ENCODE measurements at regions of chr12 and their contacts with region 1.

Region 1: GRCh38 chr12:24838531-24838950 is 110.4 kb downstream of the BCAT1 start:
- DNase-seq: peak; percentile 36
- H3K4me3 Mint-ChIP-seq: peak overlapping the region; percentile 54
- H3K27ac Mint-ChIP-seq: peak overlapping the region; percentile 90
- H3K4me1 Mint-ChIP-seq: peaks cover 59% of the 10 kb centered on the region
- H3K27me3 Mint-ChIP-seq: no peaks in the 10 kb centered on the region

Region 2: DNA sequence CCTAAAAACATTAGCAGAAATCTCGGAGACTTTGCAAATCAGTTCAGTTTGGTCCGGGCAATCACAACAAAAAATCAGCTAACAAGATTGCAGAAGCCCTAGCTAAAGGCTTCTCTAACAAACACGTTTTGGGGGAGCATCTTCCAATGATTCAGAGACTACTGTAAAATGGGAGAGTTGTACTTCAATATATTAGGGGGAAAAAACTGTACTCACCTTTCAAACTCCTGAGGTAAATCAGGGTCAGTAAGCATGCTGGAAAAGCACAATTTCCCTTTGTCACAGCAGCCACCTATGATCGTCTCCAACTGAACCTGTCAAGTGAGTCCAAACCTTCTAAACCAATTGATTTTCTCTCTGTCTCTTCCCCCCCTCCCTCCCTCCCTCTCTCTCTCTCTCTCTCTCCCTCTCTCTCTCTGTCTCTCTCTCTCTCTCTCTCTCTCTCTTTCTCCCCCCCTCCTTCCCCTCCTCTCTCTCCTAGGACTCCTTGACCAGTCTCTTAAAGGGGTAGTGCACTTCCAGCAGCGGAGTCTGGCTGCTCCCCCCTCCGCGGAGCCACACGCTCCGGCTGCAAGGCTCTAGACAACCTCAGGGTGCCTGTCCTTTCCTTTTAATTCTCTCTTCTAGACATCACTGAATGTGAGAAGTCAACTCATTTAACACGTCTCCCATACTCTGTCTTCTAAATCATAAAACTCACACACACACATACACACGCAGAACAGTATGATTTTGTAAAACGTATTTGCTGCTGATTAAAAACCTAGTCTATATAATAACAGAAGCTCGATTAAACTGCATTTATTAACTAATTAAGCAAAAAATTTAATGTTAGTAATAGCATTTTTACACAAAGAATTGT is 889.0 kb before region 1 on chr12 and contains the start of gene SOX5:
- intact Hi-C with region 1: loop called (anchors 5 kb)
- DNase-seq: no peak
- H3K4me3 Mint-ChIP-seq: no peak within 1 kb of the TSS
- H3K27ac Mint-ChIP-seq: no peak within 1 kb of the TSS
- H3K4me1 Mint-ChIP-seq: no peaks in the 10 kb centered on the region
- H3K27me3 Mint-ChIP-seq: peaks cover 4% of the 10 kb centered on the region
- total RNA-seq, gene SOX5: 1.3 and 3.1 TPM in 2 replicates

Region 3: DNA sequence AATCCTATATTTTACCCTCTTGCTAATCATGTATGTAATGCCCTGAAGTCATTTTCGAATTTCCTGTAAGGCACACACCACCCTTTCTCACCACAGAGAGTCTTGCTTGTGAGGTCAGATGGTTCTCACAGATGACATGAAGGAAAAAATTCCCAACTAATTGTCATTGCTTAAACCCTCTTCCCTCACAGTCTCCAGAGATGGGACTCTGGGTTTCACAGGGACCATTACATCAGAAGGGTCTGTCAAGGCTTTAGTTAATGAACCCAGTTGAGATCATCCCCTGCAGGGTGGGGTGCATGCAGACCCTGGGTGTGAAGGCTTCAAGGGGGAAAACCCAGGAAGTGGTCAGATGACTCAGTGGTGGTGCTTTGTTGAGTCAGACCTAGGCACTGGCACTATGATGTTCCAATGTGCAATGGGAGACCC is 119.2 kb before region 1 on chr12:
- intact Hi-C with region 1: loop called (anchors 1 kb)
- DNase-seq: peak; percentile 53
- H3K4me3 Mint-ChIP-seq: peak overlapping the region; percentile 9
- H3K27ac Mint-ChIP-seq: peak overlapping the region; percentile 80
- H3K4me1 Mint-ChIP-seq: peaks cover 35% of the 10 kb centered on the region
- H3K27me3 Mint-ChIP-seq: peaks cover 1% of the 10 kb centered on the region

Region 4: GRCh38 chr12:24795699-24796385 is 42.7 kb before region 1 on chr12:
- intact Hi-C with region 1: loop called (anchors 2 kb)
- DNase-seq: no peak
- H3K4me3 Mint-ChIP-seq: peak overlapping the region; percentile 82
- H3K27ac Mint-ChIP-seq: peak overlapping the region; percentile 10
- H3K4me1 Mint-ChIP-seq: peaks cover 48% of the 10 kb centered on the region
- H3K27me3 Mint-ChIP-seq: no peaks in the 10 kb centered on the region

Region 5: GRCh38 chr12:24808651-24809050 is 29.9 kb before region 1 on chr12:
- intact Hi-C with region 1: no loop called
- DNase-seq: no peak
- H3K4me3 Mint-ChIP-seq: no peak overlapping the region
- H3K27ac Mint-ChIP-seq: no peak overlapping the region
- H3K4me1 Mint-ChIP-seq: peaks cover 9% of the 10 kb centered on the region
- H3K27me3 Mint-ChIP-seq: no peaks in the 10 kb centered on the region

Region 6: GRCh38 chr12:24901576-24902461 is 63.3 kb after region 1 on chr12:
- intact Hi-C with region 1: loop called (anchors 1 kb)
- DNase-seq: peak; percentile 11
- H3K4me3 Mint-ChIP-seq: peak overlapping the region; percentile 99
- H3K27ac Mint-ChIP-seq: peak overlapping the region; percentile 99
- H3K4me1 Mint-ChIP-seq: peaks cover 45% of the 10 kb centered on the region
- H3K27me3 Mint-ChIP-seq: peaks cover 5% of the 10 kb centered on the region

Region 7: GRCh38 chr12:25052196-25052913 is 213.8 kb after region 1 on chr12:
- intact Hi-C with region 1: loop called (anchors 1 kb)
- DNase-seq: peak; percentile 43
- H3K4me3 Mint-ChIP-seq: peak overlapping the region; percentile 92
- H3K27ac Mint-ChIP-seq: peak overlapping the region; percentile 99
- H3K4me1 Mint-ChIP-seq: peaks cover 56% of the 10 kb centered on the region
- H3K27me3 Mint-ChIP-seq: peaks cover 4% of the 10 kb centered on the region

Region 8: DNA sequence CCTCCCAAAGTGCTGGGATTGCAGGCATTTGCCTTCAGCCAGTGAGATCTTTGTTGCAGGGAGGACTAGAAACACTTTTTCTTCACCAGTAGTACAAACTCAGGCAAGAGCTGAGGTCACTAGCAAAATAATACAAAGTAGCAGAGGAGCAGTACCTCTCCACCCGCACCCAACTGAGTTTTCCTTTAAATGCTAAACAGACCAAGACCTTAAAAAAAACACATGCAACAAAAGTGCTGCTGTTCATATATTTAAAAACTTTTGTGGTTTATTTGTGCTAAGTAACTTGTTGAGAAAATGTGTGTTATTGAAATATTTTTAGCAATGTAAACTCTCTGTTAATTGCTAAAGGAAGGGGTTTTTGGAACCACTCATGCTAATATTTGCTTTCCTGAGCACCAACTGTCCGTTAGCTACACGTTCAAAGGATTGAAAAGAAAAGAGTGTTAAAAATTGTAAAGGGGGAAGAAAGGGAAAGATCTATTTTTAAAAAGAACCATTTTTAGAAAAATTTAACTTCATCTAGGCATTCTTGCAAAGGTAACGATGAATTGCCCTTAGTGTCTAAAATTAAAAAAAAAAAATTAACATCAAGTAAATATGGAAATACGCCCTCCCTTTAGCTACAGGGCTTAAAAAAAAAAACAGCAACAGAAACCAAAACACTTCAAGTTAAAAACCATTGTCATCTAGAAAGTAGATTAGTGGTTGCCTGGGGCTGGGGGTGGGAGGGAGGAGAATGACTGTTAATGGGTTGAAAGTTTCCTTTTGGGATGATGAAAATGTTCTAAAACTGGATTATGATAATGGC is 526.2 kb after region 1 on chr12:
- intact Hi-C with region 1: loop called (anchors 1 kb)
- DNase-seq: no peak
- H3K4me3 Mint-ChIP-seq: peak overlapping the region; percentile 36
- H3K27ac Mint-ChIP-seq: peak overlapping the region; percentile 94
- H3K4me1 Mint-ChIP-seq: peaks cover 45% of the 10 kb centered on the region
- H3K27me3 Mint-ChIP-seq: peaks cover 5% of the 10 kb centered on the region

Measured in activated T-helper 1 cell treated with anti-CD3 and anti-CD28 coated beads, Interleukin-12 subunit alpha, Interleukin-12 subunit beta, Interleukin-2, Interleukin-4 antibody, amounts not matched to agents 30 ng/mL and 10 ng/mL and 1 ng/mL, durations not matched to agents 14 hours and 24 hours and 36 hours (primary cell).